B cell (primary cell): ENCODE measurements at regions of chr7 and their contacts with region 1.

Region 1: DNA sequence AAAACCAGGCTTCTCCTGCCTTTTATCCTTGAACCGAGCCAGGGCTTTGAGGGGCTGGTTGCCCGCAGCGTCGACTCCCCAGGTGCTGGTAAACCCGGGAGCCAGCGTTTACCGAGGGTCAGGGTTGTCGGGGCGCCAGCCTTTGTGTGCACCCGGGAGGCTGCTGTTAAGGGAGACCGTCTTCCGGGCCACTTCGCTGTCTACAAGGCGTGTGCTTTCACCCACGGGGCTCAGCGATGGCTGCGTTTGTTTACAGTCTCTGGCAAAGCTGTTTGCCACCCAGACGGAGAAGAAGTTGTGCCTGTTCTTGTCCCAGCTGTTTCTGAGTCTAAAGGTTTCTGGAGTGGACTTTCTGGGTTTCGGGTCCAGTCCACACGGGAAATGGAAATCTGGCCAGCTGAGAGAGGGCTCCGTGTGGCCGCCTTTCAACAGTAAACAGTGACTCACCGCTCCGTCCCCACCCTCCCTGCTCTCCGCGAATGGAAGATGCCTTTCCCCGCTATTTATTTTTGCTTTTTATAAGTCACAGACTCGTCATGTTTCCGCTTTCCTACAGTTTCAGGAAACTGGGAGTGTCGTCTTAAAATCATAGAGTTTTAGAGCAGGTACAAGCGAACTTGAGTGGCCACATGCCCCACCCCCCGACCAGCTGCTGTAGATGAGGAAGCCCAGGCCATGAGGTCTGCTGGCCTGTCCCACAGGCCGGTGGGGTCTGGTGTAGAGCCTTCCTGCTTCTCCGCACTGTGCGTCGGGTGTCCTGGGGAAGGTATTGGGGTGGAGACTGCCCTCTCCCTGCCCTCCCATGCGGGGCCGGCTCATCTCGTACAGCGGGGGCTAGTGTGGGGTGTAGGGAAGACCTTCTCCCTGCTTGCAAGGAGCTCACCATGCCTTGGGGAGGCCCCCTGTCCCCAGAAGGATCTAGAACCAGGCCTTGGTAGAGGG is 2.3 kb downstream of the MAFK start:
- DNase-seq: peak; percentile 55
- ATAC-seq: peak; percentile 36
- H3K4me3 ChIP-seq: peak overlapping the region; percentile 56 to 73 (median 61)
- H3K4me3 Mint-ChIP-seq: peak overlapping the region; percentile 92
- H3K27ac ChIP-seq: peak overlapping the region; percentile 78 to 84
- H3K27ac Mint-ChIP-seq: peak overlapping the region; percentile 94
- H3K4me1 ChIP-seq: peaks cover 24 to 38% of the 10 kb centered on the region in 2 donors
- H3K4me1 Mint-ChIP-seq: peaks cover 30% of the 10 kb centered on the region
- H3K27me3 ChIP-seq: no peaks in the 10 kb centered on the region
- H3K27me3 Mint-ChIP-seq: no peaks in the 10 kb centered on the region
- CTCF ChIP-seq: no peak

Region 2: GRCh38 chr7:1159891-1160668 is 372.7 kb before region 1 on chr7 and contains the start of gene ZFAND2A:
- CTCF ChIA-PET with region 1: no interaction called
- POLR2A ChIA-PET with region 1: no interaction called
- intact Hi-C with region 1: no loop called
- DNase-seq: peak; percentile 98
- ATAC-seq: peak; percentile 97
- H3K4me3 ChIP-seq: peak within 1 kb of the TSS; percentile 79 to 99 (median 94)
- H3K4me3 Mint-ChIP-seq: peak within 1 kb of the TSS; percentile 87
- H3K27ac ChIP-seq: peak within 1 kb of the TSS; percentile 89 to 90
- H3K27ac Mint-ChIP-seq: peak within 1 kb of the TSS; percentile 90
- H3K4me1 ChIP-seq: peaks cover 16 to 22% of the 10 kb centered on the region in 2 donors
- H3K4me1 Mint-ChIP-seq: peaks cover 24% of the 10 kb centered on the region
- H3K27me3 ChIP-seq: no peaks in the 10 kb centered on the region
- H3K27me3 Mint-ChIP-seq: no peaks in the 10 kb centered on the region
- CTCF ChIP-seq: no peak
- total RNA-seq, gene ZFAND2A: 26.7 and 27.3 TPM in 2 replicates

Region 3: DNA sequence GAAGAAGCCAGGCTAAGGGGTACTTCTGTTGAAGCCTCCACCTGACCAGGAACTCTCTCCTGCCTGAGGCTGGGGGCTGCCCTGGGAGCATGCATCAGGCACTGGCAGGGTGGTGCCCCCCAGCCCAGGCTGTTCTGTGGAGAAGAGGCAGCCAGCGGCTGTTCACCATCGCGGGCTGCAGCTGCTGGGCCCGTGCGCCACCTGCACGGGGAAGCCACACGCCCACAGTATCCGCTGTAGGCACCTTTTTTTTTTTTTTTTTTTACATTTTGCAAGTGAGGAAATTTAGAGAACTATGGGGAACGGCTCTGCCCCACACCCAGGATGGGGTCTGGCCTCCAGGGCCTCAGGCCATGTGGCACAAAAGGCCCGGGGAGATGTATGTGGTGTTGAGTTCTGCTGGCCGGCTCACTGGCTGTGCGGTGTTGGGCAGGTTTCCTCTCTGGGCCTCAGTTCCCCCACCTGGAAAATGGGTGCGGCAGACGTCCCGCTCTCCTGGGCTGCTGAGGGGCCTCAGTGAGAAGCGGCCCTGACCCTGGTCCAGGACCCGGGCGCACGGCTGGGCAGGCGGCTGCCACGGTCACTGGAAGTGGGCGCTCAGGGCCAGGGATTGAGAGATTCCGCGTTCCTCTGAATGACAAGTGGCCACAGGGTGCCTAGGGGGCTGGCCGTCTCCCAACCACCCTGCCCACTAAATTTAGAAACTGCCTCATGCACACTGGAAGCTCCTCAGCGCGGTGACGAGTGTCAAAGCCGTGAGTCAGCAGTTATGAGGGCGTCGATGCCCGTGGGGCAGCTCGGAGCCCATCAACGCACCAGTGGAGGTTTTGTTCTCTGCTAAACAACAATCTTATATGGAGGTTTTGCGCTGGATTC is 19.7 kb before region 1 on chr7:
- CTCF ChIA-PET with region 1: interaction called, 3 read pairs
- POLR2A ChIA-PET with region 1: interaction called, 6 read pairs
- intact Hi-C with region 1: loop called (anchors 2 kb)
- DNase-seq: peak; percentile 82
- ATAC-seq: peak; percentile 87
- H3K4me3 ChIP-seq: peak overlapping the region in 4 of 5 experiments; percentile 18 to 50 (median 29)
- H3K4me3 Mint-ChIP-seq: peak overlapping the region; percentile 78
- H3K27ac ChIP-seq: peak overlapping the region; percentile 63 to 64
- H3K27ac Mint-ChIP-seq: peak overlapping the region; percentile 86
- H3K4me1 ChIP-seq: peaks cover 36 to 45% of the 10 kb centered on the region in 2 donors
- H3K4me1 Mint-ChIP-seq: peaks cover 36% of the 10 kb centered on the region
- H3K27me3 ChIP-seq: peaks cover 0 to 2% (median 0%) of the 10 kb centered on the region in 4 experiments
- H3K27me3 Mint-ChIP-seq: no peaks in the 10 kb centered on the region
- CTCF ChIP-seq: no peak

Region 4: GRCh38 chr7:1555809-1556540 is 23.2 kb after region 1 on chr7 and contains the start of gene TMEM184A:
- CTCF ChIA-PET with region 1: interaction called, 3 read pairs
- POLR2A ChIA-PET with region 1: interaction called, 14 read pairs
- intact Hi-C with region 1: no loop called
- DNase-seq: peak; percentile 66
- ATAC-seq: peak; percentile 82
- H3K4me3 ChIP-seq: no peak within 1 kb of the TSS
- H3K4me3 Mint-ChIP-seq: no peak within 1 kb of the TSS
- H3K27ac ChIP-seq: no peak within 1 kb of the TSS
- H3K27ac Mint-ChIP-seq: peak within 1 kb of the TSS; percentile 32
- H3K4me1 ChIP-seq: peaks cover 0 to 7% of the 10 kb centered on the region in 2 donors
- H3K4me1 Mint-ChIP-seq: peaks cover 3% of the 10 kb centered on the region
- H3K27me3 ChIP-seq: no peaks in the 10 kb centered on the region
- H3K27me3 Mint-ChIP-seq: no peaks in the 10 kb centered on the region
- CTCF ChIP-seq: peak; percentile 48
- total RNA-seq, gene TMEM184A: not detected in 2 replicates

Region 5: DNA sequence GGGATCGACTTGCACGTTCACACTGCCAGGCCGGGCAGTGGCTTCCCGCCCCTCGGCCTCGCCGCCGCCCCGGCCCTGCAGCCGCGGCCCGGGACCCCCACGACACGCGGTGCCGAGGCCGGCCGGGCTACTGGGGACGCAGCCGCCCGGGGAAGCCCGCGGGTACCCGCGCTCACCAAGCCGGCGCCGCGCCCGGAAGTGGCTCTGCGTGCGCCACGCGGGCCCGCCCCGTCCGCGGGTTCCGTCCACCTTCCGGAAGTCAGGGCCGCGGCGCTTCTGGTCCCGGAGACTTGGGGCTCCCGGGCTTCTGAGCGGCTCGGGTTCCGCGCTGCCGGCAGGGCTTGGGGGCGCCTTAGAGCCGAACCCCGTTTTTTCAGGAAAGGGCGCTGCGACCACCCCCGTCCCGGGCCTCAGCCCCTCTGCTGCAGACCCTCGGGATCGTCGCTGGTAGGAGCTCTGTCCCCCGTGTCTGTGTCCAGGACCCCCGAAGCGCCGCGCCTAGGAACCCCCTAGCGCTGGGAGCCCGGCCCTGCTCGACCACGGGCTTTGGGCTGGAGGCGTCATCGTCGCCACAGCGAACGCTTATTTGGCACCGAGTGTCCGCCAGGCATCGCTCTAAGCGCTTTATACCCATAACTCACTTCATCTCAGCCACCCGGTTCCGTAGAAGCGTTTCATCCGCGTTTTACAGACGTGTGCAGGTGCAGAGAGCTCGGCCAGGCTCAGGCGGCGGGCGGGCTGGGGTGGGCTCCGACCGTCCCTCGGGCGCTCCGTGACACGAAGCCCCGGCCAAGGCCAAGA is 37.3 kb after region 1 on chr7 and contains the start of gene PSMG3:
- CTCF ChIA-PET with region 1: no interaction called
- POLR2A ChIA-PET with region 1: no interaction called
- intact Hi-C with region 1: loop called (anchors 1 kb)
- DNase-seq: peak; percentile 92
- ATAC-seq: peak; percentile 91
- H3K4me3 ChIP-seq: peak within 1 kb of the TSS; percentile 18 to 87 (median 80)
- H3K4me3 Mint-ChIP-seq: peak within 1 kb of the TSS; percentile 90
- H3K27ac ChIP-seq: peak within 1 kb of the TSS; percentile 84 to 89
- H3K27ac Mint-ChIP-seq: peak within 1 kb of the TSS; percentile 91
- H3K4me1 ChIP-seq: peaks cover 12 to 24% of the 10 kb centered on the region in 2 donors
- H3K4me1 Mint-ChIP-seq: peaks cover 20% of the 10 kb centered on the region
- H3K27me3 ChIP-seq: no peaks in the 10 kb centered on the region
- H3K27me3 Mint-ChIP-seq: no peaks in the 10 kb centered on the region
- CTCF ChIP-seq: peak; percentile 30
- total RNA-seq, gene PSMG3: 27.4 and 28.6 TPM in 2 replicates

Region 6: DNA sequence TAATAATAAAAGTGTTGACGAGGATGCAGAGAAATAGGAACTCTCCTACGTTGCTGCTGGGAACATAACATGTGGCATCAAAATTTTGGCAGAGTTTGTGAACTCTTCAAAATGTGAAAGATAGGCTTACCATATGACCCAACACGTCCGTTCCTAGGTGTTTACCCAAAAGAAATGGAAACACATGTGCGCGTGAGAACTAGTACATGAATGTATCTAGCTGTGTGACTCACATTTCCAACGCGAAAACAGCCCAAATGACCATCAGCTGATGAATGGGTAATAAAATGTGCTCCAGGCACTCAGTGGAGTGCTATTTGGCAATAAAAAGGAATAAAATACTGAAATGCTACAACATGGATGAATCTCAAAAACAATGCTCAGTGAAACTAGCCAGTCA is 126.9 kb after region 1 on chr7:
- CTCF ChIA-PET with region 1: no interaction called
- POLR2A ChIA-PET with region 1: no interaction called
- intact Hi-C with region 1: no loop called
- DNase-seq: no peak
- ATAC-seq: no peak
- H3K4me3 ChIP-seq: no peak overlapping the region
- H3K4me3 Mint-ChIP-seq: no peak overlapping the region
- H3K27ac ChIP-seq: no peak overlapping the region
- H3K27ac Mint-ChIP-seq: no peak overlapping the region
- H3K4me1 ChIP-seq: peaks cover 6 to 10% of the 10 kb centered on the region in 2 donors
- H3K4me1 Mint-ChIP-seq: peaks cover 2% of the 10 kb centered on the region
- H3K27me3 ChIP-seq: peaks cover 0 to 54% (median 19%) of the 10 kb centered on the region in 4 experiments
- H3K27me3 Mint-ChIP-seq: peaks cover 47% of the 10 kb centered on the region
- CTCF ChIP-seq: no peak